ENCODE measurements at regions of chr14 and their contacts with region 1.

Region 1: DNA sequence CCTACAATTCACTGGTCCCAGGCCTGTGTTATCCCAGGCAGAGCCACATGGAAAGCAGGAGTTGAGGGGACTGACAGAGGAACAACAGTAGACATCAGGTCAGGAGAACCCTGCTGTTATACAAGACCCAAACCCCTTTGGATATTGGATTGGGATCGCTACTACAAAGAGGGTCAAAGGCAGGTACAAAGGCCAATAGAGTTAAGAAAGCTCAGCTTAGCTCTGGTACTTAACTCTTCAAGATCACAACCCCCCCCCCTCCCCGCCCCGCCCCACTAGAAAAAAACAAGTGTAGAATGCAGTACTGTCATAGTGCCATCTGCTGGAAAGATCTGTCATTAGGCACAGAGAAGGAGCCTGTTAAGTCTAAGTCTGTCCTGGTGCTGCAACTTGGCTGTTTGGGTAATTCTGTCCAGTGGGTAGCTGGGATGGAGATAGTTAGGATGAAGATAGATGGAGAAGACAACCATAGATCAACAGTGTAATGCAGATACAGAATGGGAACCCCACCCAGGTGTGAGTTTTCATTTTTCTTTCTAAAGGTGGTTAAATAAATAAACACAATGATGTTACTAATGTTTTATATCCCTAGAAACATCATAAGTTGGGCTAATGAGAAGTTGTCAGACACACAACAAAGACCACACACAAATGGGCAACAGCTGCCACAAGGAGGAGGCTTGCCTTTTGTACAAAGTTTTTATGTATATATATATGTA is 17.2 kb downstream of the REM2 start:
- DNase-seq: peak in 1 of 2 experiments; percentile 58
- H3K4me3 ChIP-seq: 0 out of 8 replicates have a peak overlapping the region, but pooled peaks of 1 of the 4 experiments have one; percentile 13
- H3K27ac ChIP-seq: no peak overlapping the region
- H3K4me1 ChIP-seq: peaks cover 0 to 8% (median 4%) of the 10 kb centered on the region in 4 experiments; a peak in 2 of 7 replicates
- H3K27me3 ChIP-seq: peaks cover 10 to 35% (median 28%) of the 10 kb centered on the region in 4 experiments
- CTCF ChIP-seq: peak; percentile 1 to 75 (median 64)
- EP300 ChIP-seq: no peak
- POLR2A ChIP-seq: no peak
- RAD21 ChIP-seq: peak; percentile 64 to 75

Region 2: GRCh38 chr14:22918804-22919600 is 18.8 kb after region 1 on chr14 and contains the start of gene RBM23:
- CTCF ChIA-PET with region 1: interaction called, 40 read pairs
- POLR2A ChIA-PET with region 1: interaction called, 14 read pairs
- DNase-seq: peak; percentile 98 to 99
- H3K4me3 ChIP-seq: peak within 1 kb of the TSS; percentile 79 to 93 (median 92)
- H3K27ac ChIP-seq: peak within 1 kb of the TSS; percentile 98
- H3K4me1 ChIP-seq: peaks cover 0 to 7% (median 3%) of the 10 kb centered on the region in 4 experiments; a peak in 5 of 7 replicates
- H3K27me3 ChIP-seq: no peaks in the 10 kb centered on the region; a peak in 1 of 7 replicates
- CTCF ChIP-seq: no peak
- EP300 ChIP-seq: no peak
- POLR2A ChIP-seq: peak; percentile 80 to 98
- RAD21 ChIP-seq: no peak
- total RNA-seq, gene RBM23: 43.1 and 43.3 TPM in 2 replicates